Posterior vena cava (tissue), 2 donors: ENCODE measurements at regions of chr3 and their contacts with region 1.

Region 1: DNA sequence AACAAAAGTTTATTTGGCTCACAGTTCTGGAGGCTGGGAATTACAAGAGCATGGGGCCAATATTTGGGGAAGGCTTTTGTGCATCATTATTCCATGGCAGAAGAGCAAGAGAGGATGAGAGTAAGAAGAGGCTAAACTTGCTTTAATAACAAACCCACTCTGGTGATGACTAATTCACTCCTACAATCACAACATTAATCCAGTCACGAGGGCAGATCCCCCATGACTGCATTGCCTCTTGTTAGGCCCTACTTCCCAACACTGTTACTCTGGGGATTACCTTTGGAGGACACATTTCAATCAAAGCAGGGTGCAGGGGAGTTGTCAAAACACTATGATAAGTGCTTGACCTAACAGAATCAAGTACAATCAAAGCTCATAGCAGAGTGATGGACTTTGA is 181.7 kb downstream of the BBX start:
- DNase-seq: no peak

Region 2: DNA sequence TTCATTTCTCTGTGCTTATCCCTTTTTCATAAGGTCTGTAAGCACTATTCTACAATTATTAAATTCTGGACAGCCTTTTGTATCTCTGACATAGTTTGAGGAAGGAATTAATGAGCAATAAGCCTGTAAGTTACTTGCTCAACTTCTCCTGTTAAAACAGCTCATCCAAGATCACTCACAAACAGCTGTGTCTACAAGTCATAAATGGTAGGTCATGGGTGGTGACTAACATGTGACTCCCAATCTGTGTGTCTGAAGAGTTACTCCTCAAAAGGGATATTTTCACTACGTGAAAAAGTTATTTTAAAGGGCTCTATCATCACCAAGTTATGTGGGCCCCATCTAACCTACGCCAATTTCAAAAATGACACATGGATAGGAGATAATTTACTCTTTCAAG is 1690.5 kb before region 1 on chr3:
- intact Hi-C with region 1: no loop called
- DNase-seq: no peak

Region 3: DNA sequence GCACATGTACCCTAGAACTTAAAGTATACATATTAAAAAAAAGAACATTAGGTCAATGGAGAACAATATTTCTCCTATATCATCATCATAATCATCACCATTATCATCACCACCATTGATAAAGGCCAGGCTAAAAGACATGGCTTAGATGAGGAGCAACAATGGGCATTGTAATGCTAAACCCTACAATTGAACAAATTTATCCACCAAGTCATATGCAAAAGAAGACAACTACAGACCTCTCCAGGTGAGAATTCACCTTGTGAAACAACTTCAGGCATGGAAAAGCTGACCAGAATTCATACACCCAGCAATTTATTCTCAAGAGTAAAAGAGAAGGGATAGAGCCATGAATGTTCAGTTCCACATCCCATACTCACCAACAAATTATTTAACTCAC is 228.0 kb before region 1 on chr3:
- intact Hi-C with region 1: no loop called
- DNase-seq: no peak

Region 4: DNA sequence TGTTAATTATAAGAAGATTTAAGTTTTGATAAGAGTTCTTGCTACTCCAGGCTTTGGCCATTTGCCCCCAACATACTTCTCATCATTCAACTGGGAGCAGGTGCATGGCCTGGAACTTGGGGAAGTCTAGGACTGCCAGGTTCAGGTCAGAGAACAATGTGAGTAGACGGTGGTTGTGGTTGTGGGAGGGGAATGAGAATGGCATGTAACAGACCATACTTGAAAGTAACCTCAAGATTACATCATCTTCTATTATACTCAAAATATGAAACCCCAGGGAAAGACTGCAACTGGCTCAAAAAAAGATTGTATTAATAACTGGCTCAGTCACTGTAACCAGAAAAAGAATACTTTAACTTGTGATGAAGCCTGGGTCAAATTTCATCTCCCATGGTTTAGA is 1997.8 kb after region 1 on chr3:
- intact Hi-C with region 1: loop called in 1 of 2 experiments (anchors 10 kb)
- DNase-seq: no peak